Activated CD8-positive, alpha-beta T cell treated with anti-CD3 and anti-CD28 coated beads for 36 hours (primary cell): ENCODE measurements at regions of chr10 and their contacts with region 1.

Region 1: GRCh38 chr10:72337020-72337629 is 17.6 kb downstream of the DNAJB12 start:
- DNase-seq: peak; percentile 71
- ATAC-seq: no peak
- H3K4me3 Mint-ChIP-seq: no peak overlapping the region
- H3K27ac Mint-ChIP-seq: peak overlapping the region; percentile 84
- H3K4me1 Mint-ChIP-seq: peaks cover 63% of the 10 kb centered on the region
- H3K27me3 Mint-ChIP-seq: no peaks in the 10 kb centered on the region
- CTCF ChIP-seq: peak; percentile 100

Region 2: GRCh38 chr10:72126184-72126871 is 210.8 kb before region 1 on chr10:
- CTCF ChIA-PET with region 1: interaction called, 21 read pairs
- POLR2A ChIA-PET with region 1: no interaction called
- intact Hi-C with region 1: no loop called
- DNase-seq: no peak
- ATAC-seq: no peak
- H3K4me3 Mint-ChIP-seq: no peak overlapping the region
- H3K27ac Mint-ChIP-seq: no peak overlapping the region
- H3K4me1 Mint-ChIP-seq: peaks cover 30% of the 10 kb centered on the region
- H3K27me3 Mint-ChIP-seq: no peaks in the 10 kb centered on the region
- CTCF ChIP-seq: peak; percentile 28

Region 3: GRCh38 chr10:72215652-72216549 is 121.2 kb before region 1 on chr10 and contains the starts of genes ANAPC16 and ASCC1:
- CTCF ChIA-PET with region 1: interaction called, 18 read pairs
- POLR2A ChIA-PET with region 1: interaction called, 12 read pairs
- intact Hi-C with region 1: loop called (anchors 5 kb)
- DNase-seq: peak; percentile 94
- ATAC-seq: peak; percentile 85
- H3K4me3 Mint-ChIP-seq: peak within 1 kb of the TSS; percentile 93
- H3K27ac Mint-ChIP-seq: peak within 1 kb of the TSS; percentile 95
- H3K4me1 Mint-ChIP-seq: peaks cover 40% of the 10 kb centered on the region
- H3K27me3 Mint-ChIP-seq: no peaks in the 10 kb centered on the region
- CTCF ChIP-seq: no peak
- total RNA-seq, gene ANAPC16: 94.6 to 101 TPM
- total RNA-seq, gene ASCC1: 61.6 to 66.2 TPM

Region 4: GRCh38 chr10:72248468-72249151 is 88.5 kb before region 1 on chr10:
- CTCF ChIA-PET with region 1: interaction called, 10 read pairs
- POLR2A ChIA-PET with region 1: interaction called, 5 read pairs
- intact Hi-C with region 1: no loop called
- DNase-seq: peak; percentile 89
- ATAC-seq: peak; percentile 87
- H3K4me3 Mint-ChIP-seq: peak overlapping the region; percentile 77
- H3K27ac Mint-ChIP-seq: peak overlapping the region; percentile 93
- H3K4me1 Mint-ChIP-seq: peaks cover 72% of the 10 kb centered on the region
- H3K27me3 Mint-ChIP-seq: no peaks in the 10 kb centered on the region
- CTCF ChIP-seq: no peak

Region 5: GRCh38 chr10:72319416-72320254 is 17.5 kb before region 1 on chr10:
- CTCF ChIA-PET with region 1: interaction called, 10 read pairs
- POLR2A ChIA-PET with region 1: interaction called, 129 read pairs
- intact Hi-C with region 1: no loop called
- DNase-seq: peak; percentile 93
- ATAC-seq: peak; percentile 52
- H3K4me3 Mint-ChIP-seq: peak overlapping the region; percentile 86
- H3K27ac Mint-ChIP-seq: peak overlapping the region; percentile 99
- H3K4me1 Mint-ChIP-seq: peaks cover 78% of the 10 kb centered on the region
- H3K27me3 Mint-ChIP-seq: no peaks in the 10 kb centered on the region
- CTCF ChIP-seq: no peak